Endothelial cell of umbilical vein (primary cell): ENCODE measurements at regions of chr12 and their contacts with region 1.

Region 1: DNA sequence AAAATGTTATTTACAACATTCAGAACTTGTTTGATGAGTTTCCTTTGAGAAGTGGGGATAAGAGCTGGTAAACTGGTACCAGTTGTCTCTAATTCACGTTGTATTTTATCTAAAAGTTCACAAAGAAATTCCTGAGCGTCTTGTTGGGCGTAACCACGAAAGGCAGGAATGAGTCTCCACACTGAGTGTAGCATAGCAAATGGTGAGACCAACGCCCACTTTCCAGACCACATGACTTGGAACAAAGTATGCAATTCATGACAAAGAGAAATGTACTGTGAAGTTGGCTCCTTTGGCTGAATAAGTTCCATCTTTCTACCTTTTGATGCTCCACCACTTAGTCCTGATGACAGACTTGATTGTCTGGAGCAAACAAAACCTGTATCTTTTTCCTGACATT is 18.4 kb downstream of the USP44 start:
- DNase-seq: no peak
- H3K4me3 ChIP-seq: no peak overlapping the region
- H3K27ac ChIP-seq: no peak overlapping the region
- H3K4me1 ChIP-seq: no peaks in the 10 kb centered on the region
- H3K27me3 ChIP-seq: no peaks in the 10 kb centered on the region
- CTCF ChIP-seq: no peak
- POLR2A ChIP-seq: no peak

Region 2: GRCh38 chr12:94133964-94134795 is 1398.7 kb before region 1 on chr12:
- CTCF ChIA-PET with region 1: interaction called, 10 read pairs
- POLR2A ChIA-PET with region 1: no interaction called
- dilution Hi-C with region 1: no loop called
- intact Hi-C with region 1: no loop called
- DNase-seq: peak; percentile 56
- H3K4me3 ChIP-seq: no peak overlapping the region
- H3K27ac ChIP-seq: no peak overlapping the region
- H3K4me1 ChIP-seq: no peaks in the 10 kb centered on the region
- H3K27me3 ChIP-seq: peaks cover 8 to 9% of the 10 kb centered on the region in 2 experiments
- CTCF ChIP-seq: peak; percentile 40 to 58
- POLR2A ChIP-seq: no peak

Region 3: DNA sequence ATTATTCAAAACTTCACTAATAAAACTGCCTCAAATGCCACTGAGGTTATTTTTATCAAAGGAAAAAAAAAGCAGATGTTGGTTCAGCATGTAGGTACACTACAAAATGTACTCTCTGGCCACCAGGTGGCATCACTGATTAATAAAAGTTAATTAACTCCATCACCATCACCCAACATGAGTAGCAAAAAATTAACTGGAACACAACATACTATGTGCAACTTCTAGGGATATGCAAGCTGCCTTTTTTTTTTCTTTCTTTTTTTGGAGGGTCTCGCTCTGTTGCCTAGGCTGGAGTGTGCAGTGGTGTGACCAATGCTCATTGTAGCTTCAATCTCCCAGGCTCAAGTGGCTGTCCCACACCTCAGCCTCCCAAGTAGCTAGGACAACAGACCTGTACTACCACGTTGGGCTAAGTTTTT is 415.7 kb before region 1 on chr12:
- CTCF ChIA-PET with region 1: interaction called, 23 read pairs
- POLR2A ChIA-PET with region 1: no interaction called
- dilution Hi-C with region 1: no loop called
- intact Hi-C with region 1: no loop called
- DNase-seq: peak; percentile 85
- H3K4me3 ChIP-seq: no peak overlapping the region
- H3K27ac ChIP-seq: peak overlapping the region; percentile 88
- H3K4me1 ChIP-seq: peaks cover 25% of the 10 kb centered on the region
- H3K27me3 ChIP-seq: no peaks in the 10 kb centered on the region
- CTCF ChIP-seq: peak; percentile 42 to 45
- POLR2A ChIP-seq: no peak

Region 4: DNA sequence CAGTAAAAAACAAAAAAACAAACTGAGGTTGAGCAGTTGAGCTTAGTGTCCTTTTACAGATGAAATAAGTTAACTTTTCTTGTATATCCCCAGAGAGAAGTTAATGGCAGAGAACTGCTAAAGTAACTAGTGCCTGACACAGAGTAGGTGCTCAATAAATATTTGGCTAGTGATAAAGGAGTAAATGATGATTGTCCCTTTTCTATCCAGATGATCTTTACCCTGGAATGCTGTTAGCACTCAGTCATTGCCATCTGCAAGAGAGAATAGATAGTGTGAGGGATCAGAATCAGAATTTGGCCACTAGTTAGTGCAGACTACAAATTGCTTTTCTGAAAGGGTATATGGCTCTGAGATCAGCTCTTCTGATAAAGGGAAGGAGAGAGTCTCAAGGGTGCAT is 293.6 kb before region 1 on chr12:
- CTCF ChIA-PET with region 1: no interaction called
- POLR2A ChIA-PET with region 1: no interaction called
- dilution Hi-C with region 1: no loop called
- intact Hi-C with region 1: no loop called
- DNase-seq: no peak
- H3K4me3 ChIP-seq: no peak overlapping the region
- H3K27ac ChIP-seq: no peak overlapping the region
- H3K4me1 ChIP-seq: no peaks in the 10 kb centered on the region
- H3K27me3 ChIP-seq: no peaks in the 10 kb centered on the region
- CTCF ChIP-seq: no peak
- POLR2A ChIP-seq: no peak

Region 5: GRCh38 chr12:95343461-95344230 is 189.2 kb before region 1 on chr12:
- CTCF ChIA-PET with region 1: interaction called, 17 read pairs
- POLR2A ChIA-PET with region 1: no interaction called
- dilution Hi-C with region 1: no loop called
- intact Hi-C with region 1: no loop called
- DNase-seq: no peak
- H3K4me3 ChIP-seq: no peak overlapping the region
- H3K27ac ChIP-seq: no peak overlapping the region
- H3K4me1 ChIP-seq: no peaks in the 10 kb centered on the region
- H3K27me3 ChIP-seq: no peaks in the 10 kb centered on the region
- CTCF ChIP-seq: no peak
- POLR2A ChIP-seq: no peak

Region 6: DNA sequence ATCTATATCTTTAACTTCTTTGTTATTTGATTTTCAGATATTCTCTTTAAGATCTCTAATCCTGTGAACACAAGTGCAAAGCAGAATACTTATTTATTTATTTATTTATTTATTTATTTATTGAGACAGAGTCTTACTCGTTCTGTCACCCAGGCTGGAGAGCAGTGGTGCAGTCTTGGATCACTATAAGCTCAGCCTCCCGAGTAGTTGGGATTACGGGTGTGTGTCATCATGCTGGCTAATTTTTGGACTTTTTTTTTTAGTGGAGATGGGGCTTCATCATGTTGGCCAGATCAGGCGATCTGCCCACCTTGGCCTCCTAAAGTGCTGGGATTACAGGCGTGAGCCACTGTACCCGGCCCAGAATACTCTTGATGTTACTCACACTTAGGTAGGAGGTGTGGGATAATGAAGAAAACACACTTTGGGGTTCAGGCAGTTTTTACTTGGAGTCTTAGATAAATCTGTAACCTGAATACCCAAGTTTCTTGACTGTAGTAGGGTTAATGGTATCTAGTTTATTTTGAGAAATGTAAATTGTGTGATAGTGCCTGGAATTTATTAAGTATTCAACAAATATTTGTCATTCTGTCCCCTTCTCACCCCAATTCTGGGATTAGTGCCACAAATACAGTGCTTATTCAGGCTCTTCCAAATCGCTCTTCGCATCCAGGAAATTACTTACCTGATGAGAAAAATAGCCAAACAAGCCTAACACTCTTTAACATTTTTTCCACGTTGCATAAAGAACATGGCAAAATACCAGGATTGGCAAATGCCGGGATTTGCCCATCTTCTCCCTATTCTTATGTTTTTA is 25.9 kb before region 1 on chr12:
- CTCF ChIA-PET with region 1: interaction called, 10 read pairs
- POLR2A ChIA-PET with region 1: no interaction called
- dilution Hi-C with region 1: no loop called
- intact Hi-C with region 1: no loop called
- DNase-seq: no peak
- H3K4me3 ChIP-seq: no peak overlapping the region
- H3K27ac ChIP-seq: no peak overlapping the region
- H3K4me1 ChIP-seq: no peaks in the 10 kb centered on the region
- H3K27me3 ChIP-seq: no peaks in the 10 kb centered on the region
- CTCF ChIP-seq: no peak
- POLR2A ChIP-seq: no peak

Region 7: DNA sequence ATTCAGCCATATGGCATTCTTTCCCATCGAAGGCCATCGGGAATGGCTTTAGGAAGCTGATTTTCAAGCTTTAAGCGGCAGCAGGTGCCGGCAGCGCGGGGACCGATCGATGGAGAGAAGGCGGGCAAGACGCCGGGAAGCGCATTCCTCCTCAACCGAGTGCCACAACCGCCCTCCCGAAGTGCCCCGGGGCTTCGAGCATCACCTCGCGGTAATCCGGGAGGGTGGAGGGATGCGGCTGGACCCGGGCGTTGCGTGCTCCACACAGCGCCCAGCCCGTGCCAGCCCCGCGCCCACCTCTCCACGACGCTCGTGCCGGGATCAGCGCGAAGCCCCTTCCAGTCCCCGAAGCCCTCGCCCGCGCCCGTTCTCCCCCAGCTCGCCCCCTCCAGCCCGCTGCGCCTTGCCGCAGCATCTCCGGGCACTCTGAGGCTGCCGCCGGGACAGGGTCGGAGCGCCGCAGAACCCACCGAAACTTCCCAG is 15.2 kb after region 1 on chr12:
- CTCF ChIA-PET with region 1: interaction called, 13 read pairs
- POLR2A ChIA-PET with region 1: no interaction called
- dilution Hi-C with region 1: no loop called
- intact Hi-C with region 1: no loop called
- DNase-seq: peak; percentile 32
- H3K4me3 ChIP-seq: peak overlapping the region; percentile 48 to 69 (median 58)
- H3K27ac ChIP-seq: no peak overlapping the region
- H3K4me1 ChIP-seq: peaks cover 19% of the 10 kb centered on the region
- H3K27me3 ChIP-seq: peaks cover 8 to 14% of the 10 kb centered on the region in 2 experiments
- CTCF ChIP-seq: no peak
- POLR2A ChIP-seq: no peak